Activated CD8-positive, alpha-beta T cell treated with anti-CD3 and anti-CD28 coated beads, Interleukin-2, amount 10 ng/mL, durations not matched to agents 7 days and 5 days (primary cell): ENCODE measurements at regions of chr2 and their contacts with region 1.

Region 1: DNA sequence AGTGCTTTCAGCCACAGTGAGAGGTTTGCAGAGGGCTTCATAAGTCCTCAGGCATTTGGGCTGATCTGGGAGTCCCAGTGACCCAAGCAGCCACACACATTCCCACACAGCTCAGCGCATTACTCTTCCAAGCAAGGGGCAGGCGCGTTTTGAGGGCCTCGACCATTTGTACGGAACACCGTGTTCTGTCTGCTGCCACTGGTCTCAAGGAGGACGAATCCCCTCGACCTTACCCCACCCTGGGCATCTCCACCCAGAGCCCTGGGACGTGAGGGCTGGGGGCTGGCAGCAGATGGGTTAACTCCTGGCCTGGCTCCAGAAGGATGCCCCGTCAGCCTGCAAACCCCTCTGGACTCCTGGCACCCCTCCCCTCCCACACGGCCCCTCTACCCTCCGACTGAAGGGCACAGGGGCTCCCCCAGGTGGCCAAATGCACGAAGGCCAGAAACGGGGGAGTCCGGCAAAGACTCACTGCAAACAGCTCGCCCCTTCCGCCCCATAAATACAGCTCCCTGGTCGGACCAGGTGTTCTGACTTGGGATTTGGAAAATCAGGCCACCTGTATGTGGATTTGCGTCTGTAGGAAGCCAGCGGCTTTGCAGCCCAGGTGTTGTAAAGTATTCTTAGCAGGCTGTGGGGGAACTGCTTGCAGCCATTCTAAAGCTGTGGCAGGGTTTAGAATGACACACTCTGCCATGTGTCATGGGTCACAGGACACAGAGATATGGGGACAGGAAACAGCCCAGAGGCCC is 33.6 kb upstream of the PTMA start:
- DNase-seq: peak; percentile 74
- ATAC-seq: peak; percentile 73
- H3K4me3 Mint-ChIP-seq: no peak overlapping the region
- H3K27ac Mint-ChIP-seq: peak overlapping the region; percentile 57
- H3K4me1 Mint-ChIP-seq: peaks cover 36% of the 10 kb centered on the region
- H3K27me3 Mint-ChIP-seq: peaks cover 2% of the 10 kb centered on the region

Region 2: DNA sequence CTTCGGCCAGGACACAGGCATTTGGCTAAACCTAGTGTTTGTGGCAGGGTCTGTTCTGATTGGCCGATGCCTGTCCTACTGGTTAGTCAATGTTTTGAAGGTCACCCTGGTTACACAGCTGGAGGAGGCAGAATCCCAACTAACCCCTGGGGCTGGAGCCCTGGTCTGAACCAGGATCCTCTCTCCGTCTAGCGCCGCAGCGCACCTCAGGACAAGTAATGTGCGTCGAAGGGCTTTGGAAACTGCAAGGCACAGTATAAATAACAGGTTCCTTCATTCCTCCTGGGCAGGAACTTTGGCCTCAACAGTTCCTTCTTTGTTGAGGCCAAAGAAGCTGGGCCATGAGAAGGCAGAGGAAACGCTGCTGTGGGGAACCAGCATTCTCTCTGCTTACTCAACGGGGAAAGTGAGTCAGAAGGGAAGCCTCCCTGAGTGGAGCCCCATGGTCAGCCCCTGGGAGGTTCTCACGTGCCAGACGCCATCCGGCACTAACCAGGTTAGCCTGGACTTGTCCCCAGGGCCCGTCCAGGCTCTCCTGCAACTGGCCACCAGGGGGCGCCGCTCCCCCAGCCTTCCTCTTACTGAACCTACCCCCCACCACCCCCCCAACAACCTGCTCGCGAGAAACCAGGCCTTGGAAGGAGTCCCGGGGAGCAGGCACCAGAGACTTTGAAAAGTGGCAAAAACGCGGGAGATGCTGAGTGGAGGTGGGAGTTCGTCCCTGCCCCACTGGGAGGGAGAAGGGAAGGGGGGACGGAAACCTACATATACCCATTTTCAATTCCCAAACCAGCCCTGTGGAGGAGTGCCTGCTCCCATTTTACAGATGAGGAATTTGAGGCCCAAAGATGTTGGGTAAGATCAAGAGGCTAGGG is 62.3 kb before region 1 on chr2:
- CTCF ChIA-PET with region 1: interaction called, 445 read pairs
- POLR2A ChIA-PET with region 1: interaction called, 80 read pairs
- DNase-seq: peak; percentile 95
- ATAC-seq: peak; percentile 57
- H3K4me3 Mint-ChIP-seq: peak overlapping the region; percentile 79
- H3K27ac Mint-ChIP-seq: peak overlapping the region; percentile 92
- H3K4me1 Mint-ChIP-seq: peaks cover 48% of the 10 kb centered on the region
- H3K27me3 Mint-ChIP-seq: peaks cover 2% of the 10 kb centered on the region

Region 3: GRCh38 chr2:231627384-231628120 is 47.2 kb before region 1 on chr2:
- CTCF ChIA-PET with region 1: interaction called, 12 read pairs
- POLR2A ChIA-PET with region 1: interaction called, 3 read pairs
- DNase-seq: no peak
- ATAC-seq: peak; percentile 62
- H3K4me3 Mint-ChIP-seq: peak overlapping the region; percentile 59
- H3K27ac Mint-ChIP-seq: peak overlapping the region; percentile 91
- H3K4me1 Mint-ChIP-seq: peaks cover 20% of the 10 kb centered on the region
- H3K27me3 Mint-ChIP-seq: no peaks in the 10 kb centered on the region

Region 4: DNA sequence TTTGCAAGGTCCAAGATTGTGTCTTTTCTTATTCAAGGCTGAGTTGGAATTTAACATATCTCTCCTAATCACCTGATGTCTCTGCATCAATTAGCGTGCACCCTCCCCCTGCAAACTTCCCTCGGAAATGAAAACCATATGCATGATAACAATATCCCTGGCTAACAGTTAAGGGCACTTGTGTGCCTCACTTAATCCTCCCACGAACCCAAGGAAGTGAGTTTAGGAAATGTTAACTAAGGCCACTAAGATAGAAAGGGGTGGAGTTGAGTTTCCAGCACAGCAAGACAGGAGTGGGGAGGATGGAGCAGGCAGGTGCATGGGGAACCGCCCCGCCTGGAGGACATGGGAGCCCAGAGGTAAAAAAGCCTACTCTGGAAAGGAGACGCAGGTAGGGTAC is 18.9 kb before region 1 on chr2:
- CTCF ChIA-PET with region 1: interaction called, 65 read pairs
- POLR2A ChIA-PET with region 1: no interaction called
- DNase-seq: no peak
- ATAC-seq: no peak
- H3K4me3 Mint-ChIP-seq: no peak overlapping the region
- H3K27ac Mint-ChIP-seq: no peak overlapping the region
- H3K4me1 Mint-ChIP-seq: peaks cover 3% of the 10 kb centered on the region
- H3K27me3 Mint-ChIP-seq: peaks cover 3% of the 10 kb centered on the region

Region 5: GRCh38 chr2:231687133-231687852 is 12.5 kb after region 1 on chr2:
- CTCF ChIA-PET with region 1: interaction called, 156 read pairs
- POLR2A ChIA-PET with region 1: interaction called, 5 read pairs
- DNase-seq: peak; percentile 72
- ATAC-seq: peak; percentile 92
- H3K4me3 Mint-ChIP-seq: no peak overlapping the region
- H3K27ac Mint-ChIP-seq: no peak overlapping the region
- H3K4me1 Mint-ChIP-seq: peaks cover 15% of the 10 kb centered on the region
- H3K27me3 Mint-ChIP-seq: peaks cover 6% of the 10 kb centered on the region

Region 6: DNA sequence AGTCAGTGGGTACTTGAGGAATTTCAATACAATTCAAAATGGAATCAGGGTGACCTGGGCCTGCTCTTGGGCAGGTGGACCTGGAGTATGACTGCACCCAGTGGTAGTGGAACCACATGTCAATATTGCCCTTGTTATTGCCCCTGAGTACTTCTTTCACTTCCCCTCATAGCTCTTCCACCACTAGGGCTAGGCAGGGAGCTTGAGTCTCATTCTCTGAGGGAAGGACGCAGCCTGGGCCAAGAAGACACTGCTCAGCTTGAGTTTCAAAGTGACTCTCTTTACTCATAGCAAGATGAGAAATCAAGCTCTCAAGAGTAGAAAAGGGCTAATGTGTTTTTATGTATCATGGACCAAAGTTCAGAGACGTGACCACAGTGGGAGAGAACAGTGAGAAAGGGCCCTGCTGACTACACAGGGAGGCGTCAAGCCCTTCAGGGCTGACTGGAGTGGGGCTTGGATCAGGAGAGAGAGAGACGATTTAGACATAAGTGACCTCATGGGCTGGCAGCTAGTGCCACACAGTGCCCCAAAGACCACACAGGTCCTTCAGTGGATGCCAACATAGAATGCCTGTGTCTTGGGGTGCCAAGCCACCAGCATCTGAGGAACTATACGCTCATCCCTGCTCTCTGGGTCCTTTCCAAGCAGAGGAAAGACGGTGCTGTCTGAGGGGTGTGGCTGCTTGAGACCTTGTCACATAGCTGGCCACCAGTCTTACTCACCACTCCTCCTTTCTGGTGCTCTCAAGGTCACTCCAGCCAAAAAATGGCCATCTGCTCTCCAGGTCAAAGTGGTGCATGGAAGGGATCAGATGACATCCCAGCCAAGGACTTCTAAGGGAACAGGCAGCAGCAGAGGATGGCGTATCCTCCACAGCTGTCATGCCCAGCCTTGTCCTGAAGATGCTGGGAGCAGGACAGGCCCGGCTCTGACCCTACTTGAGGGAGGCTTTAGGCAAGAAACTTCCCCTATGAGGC is 46.5 kb after region 1 on chr2:
- CTCF ChIA-PET with region 1: interaction called, 648 read pairs
- POLR2A ChIA-PET with region 1: interaction called, 3 read pairs
- DNase-seq: no peak
- ATAC-seq: no peak
- H3K4me3 Mint-ChIP-seq: no peak overlapping the region
- H3K27ac Mint-ChIP-seq: no peak overlapping the region
- H3K4me1 Mint-ChIP-seq: peaks cover 9% of the 10 kb centered on the region
- H3K27me3 Mint-ChIP-seq: peaks cover 1% of the 10 kb centered on the region

Region 7: GRCh38 chr2:231819447-231820042 is 144.8 kb after region 1 on chr2:
- CTCF ChIA-PET with region 1: no interaction called
- POLR2A ChIA-PET with region 1: no interaction called
- DNase-seq: no peak
- ATAC-seq: no peak
- H3K4me3 Mint-ChIP-seq: no peak overlapping the region
- H3K27ac Mint-ChIP-seq: no peak overlapping the region
- H3K4me1 Mint-ChIP-seq: no peaks in the 10 kb centered on the region
- H3K27me3 Mint-ChIP-seq: peaks cover 2% of the 10 kb centered on the region